ENCODE measurements at regions of chr19 and their contacts with region 1.

Region 1: GRCh38 chr19:27858981-27859581 is 1353.9 kb downstream of the UQCRFS1 start:
- DNase-seq: peak in 1 of 2 donors; percentile 92
- H3K4me3 ChIP-seq: no peak overlapping the region
- H3K27ac ChIP-seq: peak overlapping the region; percentile 80 to 89
- H3K4me1 ChIP-seq: no peaks in the 10 kb centered on the region
- H3K27me3 ChIP-seq: no peaks in the 10 kb centered on the region
- CTCF ChIP-seq: no peak
- POLR2A ChIP-seq: no peak

Region 2: DNA sequence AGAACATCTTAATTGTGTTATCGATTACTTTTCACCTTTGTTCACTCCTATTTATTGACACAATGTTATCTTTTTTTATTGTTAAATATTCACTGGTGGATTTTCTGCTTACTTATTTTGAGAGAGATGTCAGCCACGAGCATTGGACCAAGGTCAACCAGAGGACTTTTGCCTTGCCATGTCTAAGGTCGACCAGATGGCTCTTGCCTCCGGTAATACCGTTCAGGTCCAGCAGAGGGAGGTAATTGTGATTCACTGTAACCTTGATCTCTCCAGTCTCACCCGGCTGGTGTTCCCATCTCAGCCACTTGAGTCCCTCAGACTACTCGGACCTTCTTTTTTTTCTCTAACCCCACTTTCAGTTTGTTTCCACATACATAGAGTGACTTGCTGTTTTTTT is 84.3 kb before region 1 on chr19:
- intact Hi-C with region 1: loop called (anchors 10 kb)
- DNase-seq: no peak
- H3K4me3 ChIP-seq: no peak overlapping the region
- H3K27ac ChIP-seq: no peak overlapping the region
- H3K4me1 ChIP-seq: no peaks in the 10 kb centered on the region
- H3K27me3 ChIP-seq: no peaks in the 10 kb centered on the region
- CTCF ChIP-seq: no peak
- POLR2A ChIP-seq: no peak

Region 3: DNA sequence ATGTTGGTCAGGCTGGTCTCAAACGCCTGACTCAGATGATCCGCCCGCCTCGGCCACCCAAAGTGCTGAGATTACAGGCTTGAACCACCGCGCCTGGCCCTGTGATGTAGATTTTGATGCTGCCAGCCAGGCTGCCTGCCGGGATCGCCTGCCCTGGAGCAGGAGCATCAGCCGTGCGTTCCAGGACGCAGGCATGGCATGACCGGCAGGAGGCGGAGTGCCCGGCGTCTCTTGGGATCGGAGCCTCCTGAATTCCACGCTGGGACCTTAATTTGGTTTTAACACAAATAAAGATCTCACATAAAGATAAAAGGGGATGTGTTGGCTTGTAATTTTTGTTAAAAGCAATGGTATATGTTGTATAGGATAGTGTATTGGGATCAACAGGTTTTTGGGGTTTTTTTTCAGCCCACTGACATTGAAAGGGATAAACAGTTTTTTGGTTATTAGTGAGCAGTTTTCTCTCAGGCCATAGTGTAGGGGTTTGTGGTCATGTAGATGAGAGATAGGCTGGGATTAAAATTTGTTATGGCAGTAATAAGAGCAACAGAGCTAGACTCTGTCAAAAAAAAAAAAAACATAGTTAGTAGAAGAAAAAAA is 52.5 kb before region 1 on chr19:
- intact Hi-C with region 1: no loop called
- DNase-seq: no peak
- H3K4me3 ChIP-seq: no peak overlapping the region
- H3K27ac ChIP-seq: no peak overlapping the region
- H3K4me1 ChIP-seq: no peaks in the 10 kb centered on the region
- H3K27me3 ChIP-seq: no peaks in the 10 kb centered on the region
- CTCF ChIP-seq: no peak
- POLR2A ChIP-seq: no peak

Region 4: GRCh38 chr19:29714953-29715700 is 1856.0 kb after region 1 on chr19 and contains the start of gene C19orf12:
- intact Hi-C with region 1: no loop called
- DNase-seq: peak in 1 of 2 donors; percentile 64
- H3K4me3 ChIP-seq: peak within 1 kb of the TSS; percentile 94 to 95 (median 95)
- H3K27ac ChIP-seq: peak within 1 kb of the TSS; percentile 95 to 98
- H3K4me1 ChIP-seq: peaks cover 0 to 14% of the 10 kb centered on the region in 2 donors
- H3K27me3 ChIP-seq: no peaks in the 10 kb centered on the region
- CTCF ChIP-seq: no peak
- POLR2A ChIP-seq: peak; percentile 36
- total RNA-seq, gene C19orf12: 42.7 to 230 (median 53.7) TPM